Naive thymus-derived CD4-positive, alpha-beta T cell (primary cell): ENCODE measurements at regions of chr12 and their contacts with region 1.

Region 1: GRCh38 chr12:14167005-14167628 is 185.7 kb upstream of the GRIN2B start:
- DNase-seq: peak in 6 of 9 donors; percentile 10 to 40 (median 30)
- ATAC-seq: no peak
- H3K4me3 ChIP-seq: no peak overlapping the region
- H3K4me3 Mint-ChIP-seq: peak overlapping the region in 1 of 10 donors; percentile 12
- H3K27ac ChIP-seq: no peak overlapping the region
- H3K27ac Mint-ChIP-seq: no peak overlapping the region
- H3K4me1 ChIP-seq: no peaks in the 10 kb centered on the region
- H3K4me1 Mint-ChIP-seq: peaks cover 0 to 6% (median 0%) of the 10 kb centered on the region in 7 donors
- H3K27me3 ChIP-seq: no peaks in the 10 kb centered on the region
- H3K27me3 Mint-ChIP-seq: peaks cover 6 to 16% (median 9%) of the 10 kb centered on the region in 5 donors

Region 2: DNA sequence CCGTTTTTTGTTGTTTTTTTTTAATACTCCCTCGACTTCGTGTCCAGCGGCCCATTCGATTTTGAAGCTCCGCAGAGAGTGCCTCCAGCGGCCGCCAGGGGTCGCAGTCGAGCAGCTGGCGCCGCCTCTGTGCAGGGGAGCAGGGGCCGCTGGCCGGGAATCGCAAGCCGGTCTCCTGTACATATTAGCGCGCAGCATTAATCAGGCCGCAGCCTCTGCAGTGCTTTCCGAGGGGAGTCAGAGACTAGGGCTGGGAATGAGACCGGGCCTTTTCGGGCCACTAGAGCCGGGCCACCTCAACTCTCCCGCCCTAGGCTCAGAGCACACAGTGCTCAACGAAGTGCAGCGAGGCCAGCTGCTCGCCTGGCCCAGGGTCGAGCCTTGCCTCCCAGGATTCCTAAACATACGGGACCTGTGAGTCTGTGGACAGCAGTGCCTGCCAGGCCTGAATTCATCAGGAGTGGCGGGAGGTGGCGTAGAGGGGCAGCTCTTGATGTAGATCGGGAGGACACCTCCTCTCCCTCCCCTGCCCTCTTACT is 888.8 kb before region 1 on chr12:
- CTCF ChIA-PET with region 1: interaction called, 3 read pairs
- POLR2A ChIA-PET with region 1: no interaction called
- intact Hi-C with region 1: loop called in 1 of 2 experiments (anchors 1 kb)
- DNase-seq: peak; percentile 18 to 72 (median 56)
- ATAC-seq: peak; percentile 83
- H3K4me3 ChIP-seq: no peak overlapping the region
- H3K4me3 Mint-ChIP-seq: peak overlapping the region in 4 of 10 donors; percentile 6 to 29 (median 22)
- H3K27ac ChIP-seq: no peak overlapping the region
- H3K27ac Mint-ChIP-seq: no peak overlapping the region
- H3K4me1 ChIP-seq: no peaks in the 10 kb centered on the region
- H3K4me1 Mint-ChIP-seq: peaks cover 0 to 7% (median 5%) of the 10 kb centered on the region in 7 donors
- H3K27me3 ChIP-seq: no peaks in the 10 kb centered on the region
- H3K27me3 Mint-ChIP-seq: peaks cover 37 to 45% (median 41%) of the 10 kb centered on the region in 5 donors

Region 3: GRCh38 chr12:13362260-13362841 is 804.8 kb before region 1 on chr12:
- CTCF ChIA-PET with region 1: no interaction called
- POLR2A ChIA-PET with region 1: no interaction called
- intact Hi-C with region 1: loop called (anchors 1 to 10 kb)
- DNase-seq: peak in 3 of 9 donors; percentile 4 to 15 (median 11)
- ATAC-seq: peak; percentile 36
- H3K4me3 ChIP-seq: no peak overlapping the region
- H3K4me3 Mint-ChIP-seq: no peak overlapping the region
- H3K27ac ChIP-seq: no peak overlapping the region
- H3K27ac Mint-ChIP-seq: no peak overlapping the region
- H3K4me1 ChIP-seq: no peaks in the 10 kb centered on the region
- H3K4me1 Mint-ChIP-seq: no peaks in the 10 kb centered on the region
- H3K27me3 ChIP-seq: no peaks in the 10 kb centered on the region
- H3K27me3 Mint-ChIP-seq: peaks cover 24 to 47% (median 37%) of the 10 kb centered on the region in 5 donors

Region 4: DNA sequence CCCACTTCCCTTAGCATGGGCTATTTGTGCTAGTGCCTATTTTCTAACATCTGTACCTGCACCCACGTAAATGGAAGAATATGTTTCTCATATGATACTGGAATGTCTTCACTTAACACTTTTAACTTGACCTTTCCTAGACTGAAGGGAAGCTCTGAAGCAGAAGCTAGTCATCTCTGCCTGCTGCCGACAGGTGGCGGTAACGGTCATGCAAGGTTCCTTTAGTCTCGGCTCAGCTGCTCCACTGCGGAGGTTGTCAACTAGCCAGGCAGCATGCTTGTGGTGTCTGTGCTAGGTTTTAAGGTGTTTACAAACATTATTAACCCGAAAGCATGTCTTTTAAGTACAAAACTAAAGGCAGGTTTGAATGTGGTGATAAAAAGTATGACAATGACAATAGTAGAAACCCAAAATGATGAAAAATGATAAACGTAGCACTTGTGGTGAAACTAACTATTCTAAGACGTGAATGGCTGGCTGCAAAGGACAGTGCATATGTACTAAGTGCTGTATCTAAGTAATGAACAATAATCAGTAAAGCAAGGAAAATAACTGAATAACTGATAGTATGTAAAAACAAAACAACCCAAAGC is 302.9 kb before region 1 on chr12:
- CTCF ChIA-PET with region 1: interaction called, 4 read pairs
- POLR2A ChIA-PET with region 1: no interaction called
- intact Hi-C with region 1: loop called in 1 of 2 experiments (anchors 1 kb)
- DNase-seq: peak in 6 of 9 donors; percentile 12 to 40 (median 27)
- ATAC-seq: no peak
- H3K4me3 ChIP-seq: no peak overlapping the region
- H3K4me3 Mint-ChIP-seq: no peak overlapping the region
- H3K27ac ChIP-seq: no peak overlapping the region
- H3K27ac Mint-ChIP-seq: no peak overlapping the region
- H3K4me1 ChIP-seq: no peaks in the 10 kb centered on the region
- H3K4me1 Mint-ChIP-seq: no peaks in the 10 kb centered on the region
- H3K27me3 ChIP-seq: no peaks in the 10 kb centered on the region
- H3K27me3 Mint-ChIP-seq: peaks cover 0 to 45% (median 31%) of the 10 kb centered on the region in 5 donors

Region 5: GRCh38 chr12:14129611-14130195 is 37.4 kb before region 1 on chr12:
- CTCF ChIA-PET with region 1: no interaction called
- POLR2A ChIA-PET with region 1: no interaction called
- intact Hi-C with region 1: no loop called
- DNase-seq: no peak
- ATAC-seq: no peak
- H3K4me3 ChIP-seq: no peak overlapping the region
- H3K4me3 Mint-ChIP-seq: no peak overlapping the region
- H3K27ac ChIP-seq: no peak overlapping the region
- H3K27ac Mint-ChIP-seq: no peak overlapping the region
- H3K4me1 ChIP-seq: no peaks in the 10 kb centered on the region
- H3K4me1 Mint-ChIP-seq: no peaks in the 10 kb centered on the region
- H3K27me3 ChIP-seq: no peaks in the 10 kb centered on the region
- H3K27me3 Mint-ChIP-seq: peaks cover 0 to 23% (median 18%) of the 10 kb centered on the region in 5 donors

Region 6: DNA sequence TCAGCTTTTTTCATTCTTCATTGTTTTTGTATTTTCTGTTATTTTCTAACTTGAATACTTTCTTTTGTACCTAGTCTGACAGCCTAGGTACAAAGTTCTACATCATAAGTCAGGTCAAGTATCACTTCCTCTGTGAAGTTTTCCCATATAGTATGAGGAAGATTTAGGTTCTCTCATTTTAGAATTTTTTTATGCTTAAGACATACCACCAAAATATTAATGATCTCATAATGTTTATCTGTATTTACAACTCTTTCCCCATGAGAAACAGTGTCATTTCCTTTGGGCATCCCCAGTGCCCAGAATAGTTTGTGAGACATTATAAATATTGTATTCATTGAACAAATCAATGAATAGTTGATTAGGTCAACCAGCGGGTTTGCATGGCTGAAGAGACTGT is 195.2 kb after region 1 on chr12:
- CTCF ChIA-PET with region 1: no interaction called
- POLR2A ChIA-PET with region 1: no interaction called
- intact Hi-C with region 1: no loop called
- DNase-seq: no peak
- ATAC-seq: no peak
- H3K4me3 ChIP-seq: no peak overlapping the region
- H3K4me3 Mint-ChIP-seq: no peak overlapping the region
- H3K27ac ChIP-seq: no peak overlapping the region
- H3K27ac Mint-ChIP-seq: peak overlapping the region in 6 of 9 donors; percentile 36 to 72 (median 50)
- H3K4me1 ChIP-seq: peaks cover 6 to 11% of the 10 kb centered on the region in 2 donors
- H3K4me1 Mint-ChIP-seq: peaks cover 12 to 28% (median 16%) of the 10 kb centered on the region in 7 donors
- H3K27me3 ChIP-seq: no peaks in the 10 kb centered on the region
- H3K27me3 Mint-ChIP-seq: peaks cover 0 to 2% (median 0%) of the 10 kb centered on the region in 5 donors